Caco-2 (cell line): ENCODE measurements at regions of chr10 and their contacts with region 1.

Region 1: DNA sequence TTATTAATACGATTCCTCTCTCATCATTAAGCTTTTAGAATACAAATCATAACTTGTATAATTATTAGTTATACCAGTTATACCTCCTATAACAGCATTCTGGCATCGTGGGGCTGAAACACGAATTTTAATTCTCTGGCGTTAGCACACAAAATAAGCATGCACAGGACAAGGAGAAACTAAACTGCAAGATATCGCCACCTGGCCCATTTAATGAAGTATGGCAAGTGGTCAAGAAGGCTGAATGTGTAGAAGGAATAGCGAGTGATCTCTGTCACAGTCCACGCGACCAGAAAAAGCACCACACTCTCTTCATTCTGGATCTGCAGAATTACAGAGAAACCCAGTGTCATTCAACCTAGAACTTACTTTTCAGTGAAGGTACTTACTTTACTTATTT is 18.1 kb downstream of the HACD1 start:
- DNase-seq: peak in 1 of 2 experiments; percentile 49
- H3K4me3 ChIP-seq: no peak overlapping the region
- H3K4me3 Mint-ChIP-seq: no peak overlapping the region
- H3K27ac Mint-ChIP-seq: no peak overlapping the region
- H3K4me1 ChIP-seq: no peaks in the 10 kb centered on the region
- H3K4me1 Mint-ChIP-seq: peaks cover 4% of the 10 kb centered on the region
- H3K27me3 ChIP-seq: no peaks in the 10 kb centered on the region
- H3K27me3 Mint-ChIP-seq: no peaks in the 10 kb centered on the region
- CTCF ChIP-seq: peak; percentile 57 to 58

Region 2: GRCh38 chr10:17290226-17290625 is 308.9 kb before region 1 on chr10:
- CTCF ChIA-PET with region 1: no interaction called
- POLR2A ChIA-PET with region 1: no interaction called
- intact Hi-C with region 1: loop called (anchors 1 kb)
- DNase-seq: peak in 1 of 2 experiments; percentile 63
- H3K4me3 ChIP-seq: no peak overlapping the region
- H3K4me3 Mint-ChIP-seq: no peak overlapping the region
- H3K27ac Mint-ChIP-seq: no peak overlapping the region
- H3K4me1 ChIP-seq: no peaks in the 10 kb centered on the region
- H3K4me1 Mint-ChIP-seq: peaks cover 6% of the 10 kb centered on the region
- H3K27me3 ChIP-seq: no peaks in the 10 kb centered on the region
- H3K27me3 Mint-ChIP-seq: peaks cover 14% of the 10 kb centered on the region
- CTCF ChIP-seq: peak; percentile 60 to 80

Region 3: DNA sequence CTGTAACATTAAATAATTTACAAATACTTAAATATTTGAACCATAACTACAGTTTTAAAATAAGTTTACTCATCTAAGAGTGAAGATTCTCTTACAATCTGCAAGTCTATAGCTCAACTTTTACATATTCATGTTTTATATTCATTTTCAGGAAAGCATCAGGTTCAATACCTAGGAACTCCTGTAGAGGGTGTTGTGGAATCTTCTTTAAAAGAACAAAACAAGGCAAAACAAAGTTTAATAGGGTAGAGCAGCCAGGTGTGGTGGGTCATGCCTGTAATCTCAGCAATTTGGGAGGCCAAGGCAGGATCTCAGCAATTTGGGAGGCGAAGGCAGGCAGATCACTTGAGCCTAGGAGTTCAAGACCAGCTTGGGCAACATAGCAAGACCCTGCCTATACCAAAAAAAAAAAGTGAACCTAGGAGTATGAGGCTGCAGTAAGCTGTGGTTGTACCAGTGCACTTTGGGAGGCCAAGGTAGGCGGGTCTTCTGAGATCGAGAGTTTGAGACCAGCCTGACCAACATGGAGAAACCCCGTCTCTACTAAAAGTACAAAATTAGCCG is 189.8 kb before region 1 on chr10:
- CTCF ChIA-PET with region 1: no interaction called
- POLR2A ChIA-PET with region 1: no interaction called
- intact Hi-C with region 1: loop called (anchors 2 kb)
- DNase-seq: no peak
- H3K4me3 ChIP-seq: no peak overlapping the region
- H3K4me3 Mint-ChIP-seq: no peak overlapping the region
- H3K27ac Mint-ChIP-seq: no peak overlapping the region
- H3K4me1 ChIP-seq: peaks cover 14% of the 10 kb centered on the region
- H3K4me1 Mint-ChIP-seq: peaks cover 9% of the 10 kb centered on the region
- H3K27me3 ChIP-seq: no peaks in the 10 kb centered on the region
- H3K27me3 Mint-ChIP-seq: no peaks in the 10 kb centered on the region
- CTCF ChIP-seq: peak; percentile 16 to 45

Region 4: GRCh38 chr10:17453373-17454091 is 145.6 kb before region 1 on chr10:
- CTCF ChIA-PET with region 1: no interaction called
- POLR2A ChIA-PET with region 1: no interaction called
- intact Hi-C with region 1: loop called (anchors 1 kb)
- DNase-seq: peak; percentile 50 to 55
- H3K4me3 ChIP-seq: peak overlapping the region; percentile 46
- H3K4me3 Mint-ChIP-seq: peak overlapping the region; percentile 79
- H3K27ac Mint-ChIP-seq: no peak overlapping the region
- H3K4me1 ChIP-seq: peaks cover 9% of the 10 kb centered on the region; the same call in 1 of the 2 replicates
- H3K4me1 Mint-ChIP-seq: no peaks in the 10 kb centered on the region
- H3K27me3 ChIP-seq: peaks cover 4% of the 10 kb centered on the region; the same call in 1 of the 2 replicates
- H3K27me3 Mint-ChIP-seq: peaks cover 27% of the 10 kb centered on the region
- CTCF ChIP-seq: no peak

Region 5: GRCh38 chr10:17586821-17587234 is 12.3 kb before region 1 on chr10:
- CTCF ChIA-PET with region 1: no interaction called
- POLR2A ChIA-PET with region 1: no interaction called
- intact Hi-C with region 1: no loop called
- DNase-seq: no peak
- H3K4me3 ChIP-seq: no peak overlapping the region
- H3K4me3 Mint-ChIP-seq: peak overlapping the region; percentile 55
- H3K27ac Mint-ChIP-seq: peak overlapping the region; percentile 76
- H3K4me1 ChIP-seq: peaks cover 38% of the 10 kb centered on the region
- H3K4me1 Mint-ChIP-seq: peaks cover 22% of the 10 kb centered on the region
- H3K27me3 ChIP-seq: no peaks in the 10 kb centered on the region
- H3K27me3 Mint-ChIP-seq: no peaks in the 10 kb centered on the region
- CTCF ChIP-seq: no peak